Ascending aorta (tissue), 2 donors: ENCODE measurements at regions of chr13 and their contacts with region 1.

Region 1: GRCh38 chr13:30443957-30444404 is 21.7 kb downstream of the UBE2L5 start:
- DNase-seq: no peak
- H3K4me3 ChIP-seq: no peak overlapping the region
- H3K27ac ChIP-seq: no peak overlapping the region
- H3K4me1 ChIP-seq: no peaks in the 10 kb centered on the region
- H3K27me3 ChIP-seq: no peaks in the 10 kb centered on the region
- CTCF ChIP-seq: no peak

Region 2: GRCh38 chr13:30341815-30342570 is 102.0 kb before region 1 on chr13:
- intact Hi-C with region 1: loop called (anchors 5 kb)
- DNase-seq: peak; percentile 45 to 94
- H3K4me3 ChIP-seq: peak overlapping the region in 1 of 2 donors; percentile 15
- H3K27ac ChIP-seq: peak overlapping the region; percentile 77 to 83
- H3K4me1 ChIP-seq: peaks cover 4 to 20% of the 10 kb centered on the region in 2 donors
- H3K27me3 ChIP-seq: no peaks in the 10 kb centered on the region
- CTCF ChIP-seq: no peak

Region 3: GRCh38 chr13:30395192-30396084 is 48.5 kb before region 1 on chr13:
- intact Hi-C with region 1: loop called (anchors 2 kb)
- DNase-seq: peak; percentile 85 to 95
- H3K4me3 ChIP-seq: peak overlapping the region; percentile 65 to 86
- H3K27ac ChIP-seq: peak overlapping the region; percentile 58 to 89
- H3K4me1 ChIP-seq: no peaks in the 10 kb centered on the region
- H3K27me3 ChIP-seq: no peaks in the 10 kb centered on the region
- CTCF ChIP-seq: no peak

Region 4: GRCh38 chr13:30422054-30422839 is 21.7 kb before region 1 on chr13 and contains the start of gene UBE2L5:
- intact Hi-C with region 1: loop called (anchors 2 kb)
- DNase-seq: peak; percentile 10 to 87
- H3K4me3 ChIP-seq: peak within 1 kb of the TSS; percentile 73 to 75
- H3K27ac ChIP-seq: peak within 1 kb of the TSS; percentile 95 to 98
- H3K4me1 ChIP-seq: peaks cover 8 to 12% of the 10 kb centered on the region in 2 donors
- H3K27me3 ChIP-seq: no peaks in the 10 kb centered on the region
- CTCF ChIP-seq: no peak
- total RNA-seq, gene UBE2L5: not detected

Region 5: DNA sequence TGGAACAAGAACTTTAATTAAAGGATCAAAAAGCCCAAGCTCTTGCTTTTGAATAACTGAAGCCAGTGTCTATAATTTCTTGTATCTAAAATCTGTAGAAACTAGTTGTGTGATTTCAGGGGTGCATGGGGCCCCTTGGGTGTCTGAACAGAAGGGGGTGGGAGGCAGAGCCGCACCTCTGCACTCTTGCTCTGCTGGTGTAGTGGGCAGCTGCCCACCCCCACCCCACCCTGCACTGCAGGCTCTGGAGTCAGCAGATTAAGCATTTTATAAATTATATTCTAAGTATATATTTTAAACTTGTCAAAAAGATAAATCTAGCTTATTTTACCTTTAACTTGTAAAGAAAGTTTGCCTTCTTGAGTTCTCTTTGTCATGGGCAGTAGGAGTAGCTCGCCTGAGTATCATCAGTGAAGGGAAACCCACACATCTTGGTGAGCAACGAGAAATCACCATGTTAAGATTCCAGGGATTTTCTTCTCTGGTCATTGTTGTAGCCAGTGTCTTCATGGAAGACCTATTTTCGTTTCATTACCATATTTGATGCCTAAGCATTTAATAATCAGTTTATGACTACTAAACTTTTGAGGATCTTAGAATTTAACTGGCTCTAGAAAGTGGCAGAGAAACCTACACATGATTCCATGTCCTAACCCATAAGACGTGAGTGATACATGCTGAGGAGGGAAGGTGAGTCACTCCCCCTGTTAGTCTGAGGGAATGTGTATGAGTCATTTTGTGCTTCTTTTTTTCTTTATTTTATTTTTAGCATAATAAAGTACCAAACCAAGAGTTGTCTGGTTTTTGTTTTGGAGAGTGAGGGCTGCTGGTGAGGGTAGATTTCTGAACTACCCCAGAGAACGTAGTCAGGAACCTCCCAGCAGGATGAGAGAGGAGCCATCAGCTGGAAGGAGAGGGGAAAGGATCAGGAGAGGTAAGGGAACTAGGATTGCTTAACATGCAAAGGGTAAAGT is 14.0 kb before region 1 on chr13:
- intact Hi-C with region 1: loop called (anchors 2 kb)
- DNase-seq: no peak
- H3K4me3 ChIP-seq: no peak overlapping the region
- H3K27ac ChIP-seq: peak overlapping the region; percentile 73 to 75
- H3K4me1 ChIP-seq: peaks cover 3 to 12% of the 10 kb centered on the region in 2 donors
- H3K27me3 ChIP-seq: no peaks in the 10 kb centered on the region
- CTCF ChIP-seq: no peak

Region 6: GRCh38 chr13:31199849-31200636 is 756.1 kb after region 1 on chr13 and contains the start of gene B3GLCT:
- intact Hi-C with region 1: no loop called
- DNase-seq: peak in 1 of 2 donors; percentile 88
- H3K4me3 ChIP-seq: peak within 1 kb of the TSS; percentile 88 to 97
- H3K27ac ChIP-seq: peak within 1 kb of the TSS; percentile 88 to 100
- H3K4me1 ChIP-seq: peaks cover 5 to 15% of the 10 kb centered on the region in 2 donors
- H3K27me3 ChIP-seq: no peaks in the 10 kb centered on the region
- CTCF ChIP-seq: peak; percentile 58 to 96 (median 77)
- total RNA-seq, gene B3GLCT: 8.8 TPM